ENCODE measurements at regions of chr10 and their contacts with region 1.

Region 1: DNA sequence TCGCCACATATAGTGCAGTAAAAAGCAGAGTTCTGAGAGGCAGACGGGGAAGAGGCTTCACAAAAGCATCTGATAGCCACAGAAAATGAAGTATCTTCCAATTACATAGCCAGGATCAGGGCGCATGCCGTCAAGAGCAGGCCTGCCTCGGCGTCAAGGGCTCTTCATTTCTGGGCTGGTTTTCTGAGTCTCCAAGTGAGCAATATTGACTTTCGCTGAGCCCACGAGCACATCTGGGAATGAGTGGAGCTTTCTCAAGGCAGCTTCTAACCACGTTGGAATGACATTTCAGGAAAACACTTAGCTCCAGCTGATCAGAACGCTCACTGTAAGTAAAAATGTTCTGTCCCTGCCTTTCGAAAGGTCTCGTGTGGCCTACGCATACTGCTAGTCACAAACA is 51.9 kb downstream of the CLRN3 start:
- DNase-seq: no peak
- H3K4me3 ChIP-seq: no peak overlapping the region
- H3K27ac ChIP-seq: no peak overlapping the region
- H3K4me1 ChIP-seq: no peaks in the 10 kb centered on the region
- H3K27me3 ChIP-seq: peaks cover 2% of the 10 kb centered on the region
- CTCF ChIP-seq: no peak

Region 2: GRCh38 chr10:127740594-127740993 is 100.3 kb before region 1 on chr10:
- CTCF ChIA-PET with region 1: no interaction called
- dilution Hi-C with region 1: loop called (anchors 5 kb)
- in situ Hi-C with region 1: no loop called
- intact Hi-C with region 1: no loop called
- DNase-seq: peak; percentile 42
- H3K4me3 ChIP-seq: no peak overlapping the region
- H3K27ac ChIP-seq: no peak overlapping the region
- H3K4me1 ChIP-seq: peaks cover 8% of the 10 kb centered on the region
- H3K27me3 ChIP-seq: peaks cover 3% of the 10 kb centered on the region
- CTCF ChIP-seq: no peak

Region 3: DNA sequence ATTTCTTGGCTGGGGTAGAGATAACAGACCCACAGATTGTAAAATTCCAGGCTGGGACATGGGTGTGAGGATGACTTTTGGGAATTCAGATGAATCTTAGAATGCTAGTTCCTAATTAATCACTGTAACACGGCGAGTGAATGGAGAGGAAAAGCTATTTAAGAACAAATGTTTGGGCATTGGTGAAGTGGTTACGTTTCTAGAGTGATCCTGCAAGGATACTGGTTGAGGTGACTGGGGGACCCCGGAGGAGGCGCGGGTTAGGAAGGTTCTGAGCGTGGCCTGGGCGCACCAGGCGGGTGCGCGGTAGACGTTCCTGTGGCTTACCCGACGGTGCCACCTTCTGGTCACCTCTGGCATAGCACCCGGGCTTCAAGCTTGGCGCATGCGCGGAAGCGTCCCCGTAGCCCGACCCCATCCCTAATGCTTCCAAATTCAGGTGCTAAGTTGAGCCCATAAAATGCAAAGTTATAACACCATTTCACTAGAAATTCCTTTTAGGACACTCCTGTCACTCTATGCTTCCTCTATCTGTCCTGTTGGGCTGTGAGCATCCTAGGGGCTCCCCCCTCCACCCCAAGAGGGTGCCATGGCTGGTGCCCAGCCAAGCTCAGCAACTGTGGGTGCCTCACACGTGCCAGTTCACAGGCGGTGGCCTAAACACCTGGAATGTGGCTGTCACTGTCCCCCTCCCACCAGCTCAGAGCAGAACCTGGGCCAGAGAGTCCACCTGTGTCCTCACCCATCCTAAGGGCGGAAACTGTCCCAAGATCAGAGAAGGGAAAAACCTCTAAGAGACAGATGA is 170.5 kb after region 1 on chr10:
- CTCF ChIA-PET with region 1: no interaction called
- dilution Hi-C with region 1: no loop called
- in situ Hi-C with region 1: no loop called
- intact Hi-C with region 1: no loop called
- DNase-seq: peak; percentile 40
- H3K4me3 ChIP-seq: no peak overlapping the region
- H3K27ac ChIP-seq: no peak overlapping the region
- H3K4me1 ChIP-seq: no peaks in the 10 kb centered on the region
- H3K27me3 ChIP-seq: no peaks in the 10 kb centered on the region
- CTCF ChIP-seq: peak; percentile 95 to 100